ENCODE measurements at regions of chr3 and their contacts with region 1.

Region 1: GRCh38 chr3:47522082-47522987 is 8.8 kb upstream of the ELP6 start:
- DNase-seq: peak; percentile 92
- H3K4me3 ChIP-seq: no peak overlapping the region
- H3K27ac ChIP-seq: no peak overlapping the region
- H3K4me1 ChIP-seq: peaks cover 0 to 7% (median 5%) of the 10 kb centered on the region in 4 donors
- H3K27me3 ChIP-seq: no peaks in the 10 kb centered on the region
- CTCF ChIP-seq: peak; percentile 87 to 95 (median 93)
- EP300 ChIP-seq: no peak
- POLR2A ChIP-seq: no peak

Region 2: DNA sequence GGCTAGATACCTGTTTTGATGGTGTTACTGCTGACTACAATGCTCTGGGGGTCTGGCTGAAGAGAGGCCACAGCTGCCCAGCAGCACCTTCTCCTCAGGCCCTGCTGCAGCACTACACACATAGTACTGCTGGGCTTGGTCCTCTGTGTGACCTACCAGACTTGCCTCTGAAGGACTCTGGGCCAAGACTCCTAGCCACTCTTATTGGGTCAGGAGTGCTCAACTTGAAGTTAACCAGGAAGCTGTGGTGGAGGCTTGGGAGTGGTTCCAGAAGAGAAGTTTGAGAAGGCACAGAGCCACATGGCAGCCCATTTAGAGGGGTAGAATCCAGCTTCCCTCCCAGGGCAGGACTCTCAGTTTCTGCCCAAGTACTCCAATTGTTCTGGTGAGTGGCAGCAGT is 25.4 kb before region 1 on chr3:
- intact Hi-C with region 1: no loop called
- DNase-seq: no peak
- H3K4me3 ChIP-seq: no peak overlapping the region
- H3K27ac ChIP-seq: no peak overlapping the region
- H3K4me1 ChIP-seq: no peaks in the 10 kb centered on the region
- H3K27me3 ChIP-seq: no peaks in the 10 kb centered on the region
- CTCF ChIP-seq: no peak
- EP300 ChIP-seq: no peak
- POLR2A ChIP-seq: no peak

Region 3: GRCh38 chr3:47536221-47536891 is 14.0 kb after region 1 on chr3:
- intact Hi-C with region 1: no loop called
- DNase-seq: no peak
- H3K4me3 ChIP-seq: no peak overlapping the region
- H3K27ac ChIP-seq: no peak overlapping the region
- H3K4me1 ChIP-seq: no peaks in the 10 kb centered on the region
- H3K27me3 ChIP-seq: no peaks in the 10 kb centered on the region
- CTCF ChIP-seq: no peak
- EP300 ChIP-seq: no peak
- POLR2A ChIP-seq: no peak

Region 4: DNA sequence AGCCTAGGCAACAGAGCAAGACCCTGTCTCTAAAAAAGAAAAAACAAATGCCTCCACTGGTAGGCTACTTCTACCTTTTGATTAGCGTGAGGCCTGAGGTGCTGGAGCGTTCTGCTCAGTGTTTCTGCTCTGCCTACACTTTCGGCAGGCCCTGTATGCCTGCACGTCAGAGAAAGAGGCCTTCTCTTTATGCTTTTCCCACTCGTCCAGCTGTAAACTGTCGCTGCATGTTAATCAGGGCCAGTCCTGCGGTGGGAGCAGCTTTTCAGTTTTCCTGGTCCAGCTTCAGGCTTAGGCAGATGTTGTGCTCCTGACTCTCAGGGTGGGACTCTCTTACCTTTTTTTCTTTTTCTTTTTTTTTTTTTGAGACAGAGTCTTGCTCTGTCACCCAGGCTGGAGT is 31.1 kb after region 1 on chr3:
- intact Hi-C with region 1: no loop called
- DNase-seq: no peak
- H3K4me3 ChIP-seq: no peak overlapping the region
- H3K27ac ChIP-seq: no peak overlapping the region
- H3K4me1 ChIP-seq: peaks cover 0 to 10% (median 8%) of the 10 kb centered on the region in 4 donors
- H3K27me3 ChIP-seq: no peaks in the 10 kb centered on the region
- CTCF ChIP-seq: no peak
- EP300 ChIP-seq: no peak
- POLR2A ChIP-seq: no peak

Region 5: DNA sequence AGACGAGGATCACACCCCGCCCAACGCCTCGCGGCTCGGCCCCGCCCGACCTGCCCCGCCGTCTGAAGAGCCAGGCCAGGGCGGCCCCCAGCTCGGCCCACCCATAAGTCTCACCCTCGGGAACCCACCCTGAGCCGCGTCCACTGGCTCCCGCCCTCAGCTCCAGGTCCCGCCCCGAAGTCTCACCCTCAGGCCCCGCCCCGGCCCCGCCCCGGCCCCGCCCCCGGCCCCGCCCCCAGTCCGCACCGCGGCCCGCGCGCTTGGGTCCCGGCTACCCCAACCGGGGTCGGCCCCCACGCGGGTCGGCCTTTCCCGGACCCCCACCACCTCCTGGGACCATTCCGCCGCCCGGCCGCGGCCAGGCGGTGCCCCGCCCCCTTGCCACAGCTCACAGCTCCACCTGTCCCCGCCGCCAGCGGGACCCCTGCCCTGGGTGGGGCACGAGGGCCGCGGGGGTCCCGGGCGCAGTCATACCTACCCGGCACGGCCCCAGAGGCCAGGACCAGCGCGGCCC is 55.8 kb after region 1 on chr3:
- intact Hi-C with region 1: loop called (anchors 10 kb)
- DNase-seq: no peak
- H3K4me3 ChIP-seq: peak overlapping the region; percentile 39 to 76 (median 68)
- H3K27ac ChIP-seq: peak overlapping the region in 1 of 4 donors; percentile 43
- H3K4me1 ChIP-seq: peaks cover 0 to 20% (median 16%) of the 10 kb centered on the region in 4 donors
- H3K27me3 ChIP-seq: peaks cover 0 to 26% (median 0%) of the 10 kb centered on the region in 3 donors
- CTCF ChIP-seq: no peak
- EP300 ChIP-seq: no peak
- POLR2A ChIP-seq: no peak

Region 6: DNA sequence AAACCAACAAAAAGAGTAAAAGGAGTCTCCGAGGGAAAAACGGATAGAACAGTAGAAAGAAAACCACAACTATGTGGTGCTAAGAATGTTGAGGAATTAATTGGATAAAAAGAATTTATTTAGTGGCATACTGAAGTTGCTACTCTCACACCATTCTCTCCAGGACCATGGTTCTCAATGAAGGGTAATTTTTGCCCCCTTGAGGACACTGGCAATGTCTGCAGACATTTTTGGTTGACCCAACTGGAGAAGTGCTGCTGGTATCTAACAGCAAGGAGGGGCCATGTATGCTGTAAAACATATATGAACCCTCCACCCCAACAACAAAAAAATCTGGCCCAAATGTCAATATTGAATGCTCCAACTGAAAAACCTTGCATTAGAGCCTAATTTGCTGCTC is 142.2 kb after region 1 on chr3:
- intact Hi-C with region 1: loop called (anchors 5 kb)
- DNase-seq: no peak
- H3K4me3 ChIP-seq: no peak overlapping the region
- H3K27ac ChIP-seq: no peak overlapping the region
- H3K4me1 ChIP-seq: peaks cover 0 to 4% (median 0%) of the 10 kb centered on the region in 4 donors
- H3K27me3 ChIP-seq: no peaks in the 10 kb centered on the region
- CTCF ChIP-seq: peak in 1 of 4 experiments; percentile 14
- EP300 ChIP-seq: no peak
- POLR2A ChIP-seq: no peak

Region 7: GRCh38 chr3:47772788-47773187 is 250.5 kb after region 1 on chr3:
- intact Hi-C with region 1: no loop called
- DNase-seq: peak; percentile 39
- H3K4me3 ChIP-seq: no peak overlapping the region
- H3K27ac ChIP-seq: peak overlapping the region in 1 of 4 donors; percentile 12
- H3K4me1 ChIP-seq: peaks cover 0 to 20% (median 9%) of the 10 kb centered on the region in 4 donors
- H3K27me3 ChIP-seq: no peaks in the 10 kb centered on the region
- CTCF ChIP-seq: no peak
- EP300 ChIP-seq: no peak
- POLR2A ChIP-seq: no peak

Region 8: GRCh38 chr3:47791193-47791855 is 269.0 kb after region 1 on chr3:
- intact Hi-C with region 1: loop called (anchors 1 kb)
- DNase-seq: no peak
- H3K4me3 ChIP-seq: no peak overlapping the region
- H3K27ac ChIP-seq: no peak overlapping the region
- H3K4me1 ChIP-seq: peaks cover 0 to 5% (median 2%) of the 10 kb centered on the region in 4 donors
- H3K27me3 ChIP-seq: no peaks in the 10 kb centered on the region
- CTCF ChIP-seq: no peak
- EP300 ChIP-seq: no peak
- POLR2A ChIP-seq: no peak